HepG2 (cell line): ENCODE measurements at regions of chr17 and their contacts with region 1.

Region 1: DNA sequence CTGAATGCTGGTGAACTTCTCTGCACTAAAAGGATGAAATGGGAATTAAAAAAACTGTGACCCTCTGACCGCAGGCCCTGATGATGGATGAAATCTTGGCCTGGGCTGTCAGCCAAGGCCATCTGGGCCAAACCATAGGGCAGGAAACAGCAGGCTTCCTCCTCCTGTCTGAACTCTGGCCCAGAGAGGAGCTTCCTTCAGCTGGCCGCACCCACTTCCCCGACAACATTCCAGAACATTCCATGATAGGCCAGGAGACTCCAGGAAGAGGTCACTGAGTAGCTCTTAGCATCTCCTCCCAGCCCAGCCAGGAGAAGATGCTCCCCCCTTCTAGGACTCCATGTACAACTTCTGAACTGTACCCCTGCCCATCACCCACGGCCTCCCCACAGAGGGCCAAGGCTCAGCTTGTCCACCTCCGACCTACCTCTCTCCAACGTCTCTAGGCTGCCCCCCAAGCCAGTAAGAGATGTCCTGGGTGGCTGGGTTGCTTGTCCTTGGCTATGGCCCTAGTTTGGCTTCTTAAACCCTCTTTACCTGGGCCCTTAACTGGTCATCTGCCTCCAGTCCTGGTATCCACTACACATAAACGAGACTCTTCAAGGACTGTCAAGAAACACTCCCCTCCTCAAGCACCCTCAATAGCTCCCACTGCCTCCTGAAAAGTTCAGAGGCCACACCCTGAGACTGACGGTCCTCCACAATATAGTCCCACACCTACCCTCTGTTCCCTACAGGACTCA is 1.7 kb downstream of the RPH3AL start:
- DNase-seq: peak; percentile 50
- ATAC-seq: no peak
- H3K4me3 ChIP-seq: peak overlapping the region in 1 of 3 experiments; percentile 12; a peak in 1 of 6 replicates
- H3K27ac ChIP-seq: peak overlapping the region; percentile 98
- H3K4me1 ChIP-seq: peaks cover 74% of the 10 kb centered on the region
- H3K27me3 ChIP-seq: no peaks in the 10 kb centered on the region
- CTCF ChIP-seq: 0 out of 2 replicates have a peak, but pooled peaks have one; percentile 3
- EP300 ChIP-seq: peak in 1 of 2 experiments; percentile 32; a peak in 2 of 4 replicates
- POLR2A ChIP-seq: no peak
- RAD21 ChIP-seq: no peak

Region 2: GRCh38 chr17:193841-194806 is 156.8 kb before region 1 on chr17:
- CTCF ChIA-PET with region 1: no interaction called
- POLR2A ChIA-PET with region 1: interaction called, 12 read pairs
- in situ Hi-C with region 1: no loop called
- intact Hi-C with region 1: no loop called
- DNase-seq: peak; percentile 60
- ATAC-seq: peak; percentile 82
- H3K4me3 ChIP-seq: peak overlapping the region in 2 of 3 experiments; percentile 19 to 65; a peak in 2 of 6 replicates
- H3K27ac ChIP-seq: no peak overlapping the region
- H3K4me1 ChIP-seq: peaks cover 21% of the 10 kb centered on the region
- H3K27me3 ChIP-seq: peaks cover 0 to 5% of the 10 kb centered on the region in 2 experiments; a peak in 1 of 5 replicates
- CTCF ChIP-seq: 0 out of 2 replicates have a peak, but pooled peaks have one; percentile 14
- EP300 ChIP-seq: no peak
- POLR2A ChIP-seq: peak in 1 of 2 experiments; percentile 48; a peak in 2 of 4 replicates
- RAD21 ChIP-seq: no peak

Region 3: GRCh38 chr17:320139-320538 is 30.7 kb before region 1 on chr17:
- CTCF ChIA-PET with region 1: no interaction called
- POLR2A ChIA-PET with region 1: no interaction called
- in situ Hi-C with region 1: no loop called
- intact Hi-C with region 1: no loop called
- DNase-seq: no peak
- ATAC-seq: no peak
- H3K4me3 ChIP-seq: no peak overlapping the region
- H3K27ac ChIP-seq: no peak overlapping the region
- H3K4me1 ChIP-seq: no peaks in the 10 kb centered on the region
- H3K27me3 ChIP-seq: no peaks in the 10 kb centered on the region
- CTCF ChIP-seq: no peak
- EP300 ChIP-seq: no peak
- POLR2A ChIP-seq: no peak
- RAD21 ChIP-seq: no peak

Region 4: GRCh38 chr17:338442-339192 is 12.3 kb before region 1 on chr17:
- CTCF ChIA-PET with region 1: interaction called, 4 read pairs
- POLR2A ChIA-PET with region 1: interaction called, 59 read pairs
- in situ Hi-C with region 1: no loop called
- intact Hi-C with region 1: loop called (anchors 1 kb)
- DNase-seq: peak; percentile 81
- ATAC-seq: peak; percentile 98
- H3K4me3 ChIP-seq: peak overlapping the region in 1 of 3 experiments; percentile 22; a peak in 1 of 6 replicates
- H3K27ac ChIP-seq: peak overlapping the region; percentile 52
- H3K4me1 ChIP-seq: peaks cover 27% of the 10 kb centered on the region
- H3K27me3 ChIP-seq: no peaks in the 10 kb centered on the region
- CTCF ChIP-seq: peak; percentile 9; the same call in 1 of the 2 replicates
- EP300 ChIP-seq: peak; percentile 51 to 65; a peak in 2 of 4 replicates
- POLR2A ChIP-seq: no peak
- RAD21 ChIP-seq: no peak; the same call in none of the 2 replicates

Region 5: DNA sequence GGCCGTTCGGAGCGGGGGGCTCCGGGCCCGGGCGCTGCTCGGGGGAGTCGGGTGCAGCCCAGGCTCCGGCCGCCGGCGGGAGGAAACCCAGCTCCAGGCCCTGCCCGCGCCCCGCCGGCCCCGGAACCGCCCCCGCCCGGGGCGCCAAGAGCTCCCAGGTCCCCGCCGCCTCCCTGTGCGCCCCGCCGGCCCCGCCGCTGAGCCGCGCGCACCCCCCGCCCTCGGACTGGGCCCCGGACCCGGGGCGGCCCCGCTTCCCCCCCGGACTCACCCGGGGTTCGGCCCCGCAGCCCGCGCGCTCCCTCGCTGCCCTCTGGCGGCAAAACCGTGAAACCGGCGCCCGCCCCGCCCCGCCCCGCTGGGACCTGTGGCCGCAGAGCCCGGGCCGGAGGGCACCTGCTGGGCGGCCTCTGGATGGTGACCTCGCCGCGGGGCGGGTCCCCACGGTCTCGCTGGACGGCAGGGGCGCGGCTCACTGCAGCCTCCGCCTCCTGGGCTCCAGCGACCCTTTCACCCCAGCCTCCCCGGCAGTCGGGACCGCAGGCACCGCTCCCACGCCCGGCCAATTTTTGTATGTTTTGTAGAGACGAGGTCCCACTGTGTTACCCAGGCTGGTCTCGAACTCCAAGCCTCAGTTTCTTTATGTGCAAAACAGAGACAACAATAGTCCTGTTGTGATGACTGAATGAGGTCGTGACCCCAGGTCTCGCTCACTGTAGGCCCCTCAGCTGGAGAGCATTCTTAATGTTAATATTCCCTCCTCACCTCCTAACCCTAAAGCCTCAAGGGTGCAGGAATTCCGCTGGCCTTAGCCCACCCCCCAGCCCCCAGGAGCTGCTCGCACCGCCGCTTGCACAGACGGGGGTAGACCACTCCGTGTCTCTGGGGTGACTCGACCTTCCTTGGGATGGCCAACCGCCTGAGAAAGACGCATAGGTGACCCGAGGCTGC is 35.3 kb after region 1 on chr17:
- CTCF ChIA-PET with region 1: no interaction called
- POLR2A ChIA-PET with region 1: interaction called, 14 read pairs
- in situ Hi-C with region 1: no loop called
- intact Hi-C with region 1: no loop called
- DNase-seq: peak; percentile 47
- ATAC-seq: peak; percentile 86
- H3K4me3 ChIP-seq: peak overlapping the region; percentile 55 to 70 (median 57)
- H3K27ac ChIP-seq: no peak overlapping the region
- H3K4me1 ChIP-seq: peaks cover 62% of the 10 kb centered on the region
- H3K27me3 ChIP-seq: 0 out of 5 replicates have a peak, but pooled peaks cover 0 to 1% of the 10 kb centered on the region in 2 experiments
- CTCF ChIP-seq: peak; percentile 79
- EP300 ChIP-seq: no peak
- POLR2A ChIP-seq: peak in 1 of 2 experiments; percentile 55; a peak in 2 of 4 replicates
- RAD21 ChIP-seq: peak; percentile 90